ENCODE measurements at regions of chr18 and their contacts with region 1.

Region 1: GRCh38 chr18:3454365-3455089 is 4.6 kb downstream of the TGIF1 start:
- DNase-seq: peak; percentile 53 to 61 (median 57)
- H3K4me3 ChIP-seq: peak overlapping the region; percentile 40 to 52
- H3K4me3 Mint-ChIP-seq: peak overlapping the region; percentile 80 to 97 (median 95)
- H3K27ac ChIP-seq: peak overlapping the region; percentile 94
- H3K27ac Mint-ChIP-seq: peak overlapping the region; percentile 87 to 100 (median 98)
- H3K4me1 ChIP-seq: peaks cover 70% of the 10 kb centered on the region
- H3K4me1 Mint-ChIP-seq: peaks cover 43 to 84% (median 59%) of the 10 kb centered on the region in 4 donors
- H3K27me3 ChIP-seq: no peaks in the 10 kb centered on the region
- H3K27me3 Mint-ChIP-seq: peaks cover 0 to 2% of the 10 kb centered on the region in 2 donors

Region 2: DNA sequence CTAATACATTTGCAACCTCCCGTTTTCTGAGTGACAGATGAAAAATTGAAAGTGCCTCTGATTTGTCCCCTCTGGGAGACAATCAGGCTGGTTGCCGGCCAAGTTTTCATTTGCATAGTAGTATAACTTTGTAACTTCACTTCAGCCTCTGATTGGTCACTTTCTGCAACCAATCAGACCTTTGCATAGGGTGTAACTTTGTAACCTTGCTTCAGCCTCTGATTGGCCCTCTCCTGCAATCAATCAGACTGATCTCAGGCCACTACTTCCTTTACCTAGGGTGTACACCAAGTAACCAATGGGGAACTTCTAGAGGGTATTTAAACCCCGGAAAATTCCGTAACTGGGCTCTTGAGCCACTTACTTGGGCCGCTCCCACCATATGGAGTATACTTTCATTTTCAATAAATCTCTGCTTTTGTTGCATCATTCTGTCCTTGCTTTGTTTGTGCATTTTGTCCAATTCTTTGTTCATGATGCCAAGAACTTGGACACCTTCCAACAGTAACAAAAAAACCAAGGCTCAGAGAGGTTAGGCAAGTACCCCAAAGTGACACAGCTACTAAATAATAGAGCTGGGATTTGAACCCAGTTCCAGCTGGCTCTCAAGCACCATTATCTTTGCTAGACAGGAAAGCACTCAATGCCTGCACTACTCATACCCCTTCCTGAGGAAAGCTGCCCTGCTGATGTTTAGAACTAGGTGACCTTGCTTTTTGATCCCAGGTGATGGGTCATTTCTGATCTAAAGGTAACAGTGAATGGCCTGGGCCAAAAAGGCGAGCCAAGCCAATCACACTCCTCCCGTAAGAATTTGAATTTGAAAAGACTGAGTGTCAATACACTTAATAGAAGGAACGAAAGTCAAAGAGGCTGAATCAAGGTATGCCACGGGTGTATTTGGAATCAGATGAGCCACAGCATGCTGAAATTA is 223.9 kb before region 1 on chr18:
- CTCF ChIA-PET with region 1: no interaction called
- POLR2A ChIA-PET with region 1: no interaction called
- intact Hi-C with region 1: no loop called
- DNase-seq: no peak
- H3K4me3 ChIP-seq: no peak overlapping the region
- H3K4me3 Mint-ChIP-seq: peak overlapping the region in 1 of 8 donors; percentile 5
- H3K27ac ChIP-seq: no peak overlapping the region
- H3K27ac Mint-ChIP-seq: peak overlapping the region in 1 of 7 donors; percentile 35
- H3K4me1 ChIP-seq: no peaks in the 10 kb centered on the region
- H3K4me1 Mint-ChIP-seq: peaks cover 0 to 1% (median 0%) of the 10 kb centered on the region in 4 donors
- H3K27me3 ChIP-seq: no peaks in the 10 kb centered on the region
- H3K27me3 Mint-ChIP-seq: no peaks in the 10 kb centered on the region

Region 3: DNA sequence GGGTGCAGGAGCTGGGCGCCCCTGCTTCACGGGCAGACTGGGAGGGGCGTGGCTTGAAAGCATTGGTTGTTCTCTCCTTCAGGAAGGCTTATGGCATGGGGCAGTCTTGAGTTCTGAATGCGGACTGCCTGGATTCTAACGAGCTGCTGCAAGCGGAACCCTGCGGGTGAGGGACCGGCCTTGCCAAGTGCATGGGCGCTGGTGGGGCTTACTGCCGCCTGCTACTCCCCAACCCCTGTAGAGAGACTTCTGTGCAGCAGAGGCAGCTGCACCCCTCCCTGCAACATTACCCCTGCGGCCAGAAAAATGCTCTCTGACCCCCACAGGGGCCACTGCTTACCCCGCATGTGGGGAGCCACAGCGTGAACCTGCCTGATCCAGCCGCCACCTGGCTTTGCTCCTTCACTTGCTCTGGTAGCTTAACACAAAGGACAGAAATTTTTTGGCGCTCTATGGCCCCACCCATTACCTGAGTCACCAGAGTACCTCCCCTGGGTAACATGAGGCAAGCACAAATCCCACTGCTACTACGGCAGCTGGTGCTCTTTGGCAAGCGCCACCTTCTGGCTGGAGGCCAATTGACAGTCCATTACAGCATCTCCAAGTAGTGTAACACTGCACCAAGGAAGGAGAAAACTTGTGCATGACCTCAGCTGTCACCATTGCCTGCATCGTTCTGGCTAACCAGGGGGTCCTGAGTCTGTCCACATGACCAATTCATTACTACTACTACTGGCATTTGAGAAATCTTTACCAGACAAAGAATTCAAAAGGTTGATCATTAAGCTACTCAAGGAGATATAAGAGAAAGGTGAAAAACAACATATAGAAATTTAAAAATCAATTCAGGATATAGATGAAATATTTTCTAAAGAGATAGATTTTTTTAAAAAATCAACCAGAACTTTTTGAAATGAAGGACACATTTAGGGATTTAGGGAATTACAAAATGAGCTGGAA is 157.2 kb before region 1 on chr18:
- CTCF ChIA-PET with region 1: interaction called, 45 read pairs
- POLR2A ChIA-PET with region 1: interaction called, 25 read pairs
- intact Hi-C with region 1: loop called (anchors 1 kb)
- DNase-seq: peak; percentile 88 to 95 (median 90)
- H3K4me3 ChIP-seq: peak overlapping the region; percentile 71 to 86
- H3K4me3 Mint-ChIP-seq: peak overlapping the region; percentile 91 to 98 (median 94)
- H3K27ac ChIP-seq: peak overlapping the region; percentile 44
- H3K27ac Mint-ChIP-seq: peak overlapping the region; percentile 51 to 96 (median 90)
- H3K4me1 ChIP-seq: peaks cover 9% of the 10 kb centered on the region
- H3K4me1 Mint-ChIP-seq: peaks cover 2 to 15% (median 10%) of the 10 kb centered on the region in 4 donors
- H3K27me3 ChIP-seq: no peaks in the 10 kb centered on the region
- H3K27me3 Mint-ChIP-seq: peaks cover 8 to 13% of the 10 kb centered on the region in 2 donors

Region 4: DNA sequence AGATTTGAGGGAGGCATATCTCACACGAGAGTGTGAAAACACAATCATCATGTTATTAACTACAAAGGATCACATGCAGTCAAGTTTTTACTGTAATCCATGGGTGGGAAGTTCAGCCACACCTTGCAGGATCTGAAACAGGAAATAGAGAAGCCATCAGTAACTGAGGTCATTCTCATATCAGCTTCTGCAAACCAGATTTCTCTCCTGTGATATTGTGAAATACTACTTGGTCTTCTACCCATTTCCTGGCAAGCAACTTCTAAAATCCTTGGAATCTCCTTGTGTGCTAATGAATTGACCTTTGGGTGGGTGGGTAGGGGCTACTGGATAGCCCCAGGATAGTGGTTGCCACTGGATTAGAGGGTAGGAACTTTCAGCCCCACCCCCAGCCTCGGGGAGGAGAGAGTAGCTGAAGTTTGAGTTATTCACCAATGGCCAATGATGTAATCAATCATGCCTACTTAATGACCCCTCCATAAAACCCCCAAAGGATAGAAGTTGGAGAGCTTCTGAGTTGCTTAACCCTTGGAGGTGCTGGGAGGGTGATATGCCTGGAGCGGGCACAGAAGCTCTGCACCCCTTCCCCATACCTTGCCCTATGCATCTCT is 30.1 kb before region 1 on chr18:
- CTCF ChIA-PET with region 1: no interaction called
- POLR2A ChIA-PET with region 1: no interaction called
- intact Hi-C with region 1: no loop called
- DNase-seq: no peak
- H3K4me3 ChIP-seq: no peak overlapping the region
- H3K4me3 Mint-ChIP-seq: no peak overlapping the region
- H3K27ac ChIP-seq: no peak overlapping the region
- H3K27ac Mint-ChIP-seq: no peak overlapping the region
- H3K4me1 ChIP-seq: no peaks in the 10 kb centered on the region
- H3K4me1 Mint-ChIP-seq: no peaks in the 10 kb centered on the region
- H3K27me3 ChIP-seq: no peaks in the 10 kb centered on the region
- H3K27me3 Mint-ChIP-seq: no peaks in the 10 kb centered on the region

Region 5: GRCh38 chr18:3441290-3441689 is 13.2 kb before region 1 on chr18:
- CTCF ChIA-PET with region 1: interaction called, 47 read pairs
- POLR2A ChIA-PET with region 1: interaction called, 139 read pairs
- intact Hi-C with region 1: loop called (anchors 1 kb)
- DNase-seq: peak in 3 of 5 donors; percentile 20 to 30 (median 21)
- H3K4me3 ChIP-seq: no peak overlapping the region
- H3K4me3 Mint-ChIP-seq: no peak overlapping the region
- H3K27ac ChIP-seq: no peak overlapping the region
- H3K27ac Mint-ChIP-seq: no peak overlapping the region
- H3K4me1 ChIP-seq: no peaks in the 10 kb centered on the region
- H3K4me1 Mint-ChIP-seq: no peaks in the 10 kb centered on the region
- H3K27me3 ChIP-seq: no peaks in the 10 kb centered on the region
- H3K27me3 Mint-ChIP-seq: peaks cover 0 to 2% of the 10 kb centered on the region in 2 donors

Region 6: GRCh38 chr18:3500016-3500415 is 45.5 kb after region 1 on chr18:
- CTCF ChIA-PET with region 1: no interaction called
- POLR2A ChIA-PET with region 1: interaction called, 3 read pairs
- intact Hi-C with region 1: loop called (anchors 5 kb)
- DNase-seq: no peak
- H3K4me3 ChIP-seq: no peak overlapping the region
- H3K4me3 Mint-ChIP-seq: peak overlapping the region in 1 of 8 donors; percentile 61
- H3K27ac ChIP-seq: no peak overlapping the region
- H3K27ac Mint-ChIP-seq: no peak overlapping the region
- H3K4me1 ChIP-seq: peaks cover 9% of the 10 kb centered on the region
- H3K4me1 Mint-ChIP-seq: peaks cover 6 to 17% (median 11%) of the 10 kb centered on the region in 4 donors
- H3K27me3 ChIP-seq: peaks cover 24% of the 10 kb centered on the region
- H3K27me3 Mint-ChIP-seq: peaks cover 27 to 31% of the 10 kb centered on the region in 2 donors

Region 7: GRCh38 chr18:3593904-3594661 is 139.6 kb after region 1 on chr18:
- CTCF ChIA-PET with region 1: interaction called, 81 read pairs
- POLR2A ChIA-PET with region 1: interaction called, 164 read pairs
- intact Hi-C with region 1: no loop called
- DNase-seq: peak; percentile 93 to 96 (median 95)
- H3K4me3 ChIP-seq: peak overlapping the region; percentile 68 to 72
- H3K4me3 Mint-ChIP-seq: peak overlapping the region; percentile 88 to 95 (median 91)
- H3K27ac ChIP-seq: peak overlapping the region; percentile 91
- H3K27ac Mint-ChIP-seq: peak overlapping the region; percentile 98 to 100 (median 99)
- H3K4me1 ChIP-seq: peaks cover 53% of the 10 kb centered on the region
- H3K4me1 Mint-ChIP-seq: peaks cover 37 to 66% (median 49%) of the 10 kb centered on the region in 4 donors
- H3K27me3 ChIP-seq: no peaks in the 10 kb centered on the region
- H3K27me3 Mint-ChIP-seq: no peaks in the 10 kb centered on the region

Measured in CD4-positive, alpha-beta memory T cell (primary cell).